Activated CD4-positive, alpha-beta T cell treated with anti-CD3 and anti-CD28 coated beads, Interleukin-2, amount 10 ng/mL, durations not matched to agents 24 days and 14 days (primary cell): ENCODE measurements at regions of chrX and their contacts with region 1.

Region 1: GRCh38 chrX:133670383-133670782 is 255.1 kb upstream of the GPC4 start:
- DNase-seq: peak; percentile 53
- H3K4me3 Mint-ChIP-seq: no peak overlapping the region
- H3K27ac Mint-ChIP-seq: no peak overlapping the region
- H3K4me1 Mint-ChIP-seq: no peaks in the 10 kb centered on the region
- H3K27me3 Mint-ChIP-seq: no peaks in the 10 kb centered on the region

Region 2: GRCh38 chrX:132968296-132968949 is 702.0 kb before region 1 on chrX:
- intact Hi-C with region 1: loop called (anchors 10 kb)
- DNase-seq: peak; percentile 14
- H3K4me3 Mint-ChIP-seq: no peak overlapping the region
- H3K27ac Mint-ChIP-seq: no peak overlapping the region
- H3K4me1 Mint-ChIP-seq: no peaks in the 10 kb centered on the region
- H3K27me3 Mint-ChIP-seq: peaks cover 11% of the 10 kb centered on the region

Region 3: GRCh38 chrX:133335027-133335426 is 335.4 kb before region 1 on chrX:
- intact Hi-C with region 1: loop called (anchors 2 kb)
- DNase-seq: peak; percentile 58
- H3K4me3 Mint-ChIP-seq: no peak overlapping the region
- H3K27ac Mint-ChIP-seq: no peak overlapping the region
- H3K4me1 Mint-ChIP-seq: no peaks in the 10 kb centered on the region
- H3K27me3 Mint-ChIP-seq: peaks cover 2% of the 10 kb centered on the region

Region 4: GRCh38 chrX:133745349-133745748 is 75.0 kb after region 1 on chrX:
- intact Hi-C with region 1: no loop called
- DNase-seq: peak; percentile 49
- H3K4me3 Mint-ChIP-seq: no peak overlapping the region
- H3K27ac Mint-ChIP-seq: no peak overlapping the region
- H3K4me1 Mint-ChIP-seq: peaks cover 8% of the 10 kb centered on the region
- H3K27me3 Mint-ChIP-seq: no peaks in the 10 kb centered on the region